Motor neuron (in vitro differentiated cells): ENCODE measurements at regions of chr1 and their contacts with region 1.

Region 1: GRCh38 chr1:52002038-52002917 is 11.8 kb upstream of the RAB3B start:
- ATAC-seq: peak; percentile 86 to 98 (median 95)
- H3K4me3 ChIP-seq: no peak overlapping the region
- H3K27ac ChIP-seq: no peak overlapping the region
- H3K4me1 ChIP-seq: peaks cover 16 to 24% of the 10 kb centered on the region in 2 donors

Region 2: GRCh38 chr1:51906306-51907078 is 95.8 kb before region 1 on chr1:
- in situ Hi-C with region 1: loop called in 4 of 9 experiments (anchors 10 to 25 kb)
- ATAC-seq: peak in 3 of 8 experiments; percentile 41 to 71 (median 58)
- H3K4me3 ChIP-seq: no peak overlapping the region
- H3K27ac ChIP-seq: no peak overlapping the region
- H3K4me1 ChIP-seq: peaks cover 5 to 6% of the 10 kb centered on the region in 2 donors